ENCODE measurements at regions of chr3 and their contacts with region 1.

Region 1: DNA sequence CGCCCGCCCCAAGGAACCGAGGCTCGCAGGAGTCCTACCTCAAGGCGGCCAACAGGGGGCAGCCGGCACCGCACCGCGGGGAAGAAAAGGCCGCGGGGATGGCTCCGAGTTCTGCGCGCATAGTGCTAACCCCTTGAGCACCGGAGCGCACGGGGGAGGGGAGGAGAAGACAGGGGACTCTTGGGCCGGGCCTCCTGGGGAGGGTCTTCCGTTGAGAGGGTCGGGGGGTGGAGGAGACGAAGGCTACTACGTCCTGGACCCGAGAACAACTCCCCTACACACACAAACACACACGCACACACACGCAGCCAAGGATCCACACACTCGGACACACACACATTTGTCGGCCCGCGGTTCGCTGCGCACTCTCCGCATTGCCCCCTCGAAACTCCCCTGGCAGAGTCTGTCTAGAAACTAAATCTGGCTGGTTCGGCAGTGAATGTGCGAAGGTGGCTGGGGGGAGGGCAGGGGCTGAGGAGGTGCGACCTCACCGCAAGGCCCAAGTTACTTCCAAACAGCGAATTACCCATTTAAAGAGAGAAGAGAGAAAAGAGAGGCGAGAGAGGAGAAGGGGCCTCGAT is 1.8 kb downstream of the WNT5A start:
- DNase-seq: peak; percentile 78
- ATAC-seq: peak; percentile 71
- H3K4me3 Mint-ChIP-seq: peak overlapping the region; percentile 17
- H3K27ac Mint-ChIP-seq: no peak overlapping the region
- H3K4me1 Mint-ChIP-seq: peaks cover 34% of the 10 kb centered on the region
- H3K27me3 Mint-ChIP-seq: peaks cover 70% of the 10 kb centered on the region

Region 2: GRCh38 chr3:55615694-55616295 is 130.5 kb after region 1 on chr3:
- CTCF ChIA-PET with region 1: no interaction called
- POLR2A ChIA-PET with region 1: no interaction called
- intact Hi-C with region 1: no loop called
- DNase-seq: no peak
- ATAC-seq: no peak
- H3K4me3 Mint-ChIP-seq: no peak overlapping the region
- H3K27ac Mint-ChIP-seq: no peak overlapping the region
- H3K4me1 Mint-ChIP-seq: peaks cover 3% of the 10 kb centered on the region
- H3K27me3 Mint-ChIP-seq: peaks cover 6% of the 10 kb centered on the region

Region 3: DNA sequence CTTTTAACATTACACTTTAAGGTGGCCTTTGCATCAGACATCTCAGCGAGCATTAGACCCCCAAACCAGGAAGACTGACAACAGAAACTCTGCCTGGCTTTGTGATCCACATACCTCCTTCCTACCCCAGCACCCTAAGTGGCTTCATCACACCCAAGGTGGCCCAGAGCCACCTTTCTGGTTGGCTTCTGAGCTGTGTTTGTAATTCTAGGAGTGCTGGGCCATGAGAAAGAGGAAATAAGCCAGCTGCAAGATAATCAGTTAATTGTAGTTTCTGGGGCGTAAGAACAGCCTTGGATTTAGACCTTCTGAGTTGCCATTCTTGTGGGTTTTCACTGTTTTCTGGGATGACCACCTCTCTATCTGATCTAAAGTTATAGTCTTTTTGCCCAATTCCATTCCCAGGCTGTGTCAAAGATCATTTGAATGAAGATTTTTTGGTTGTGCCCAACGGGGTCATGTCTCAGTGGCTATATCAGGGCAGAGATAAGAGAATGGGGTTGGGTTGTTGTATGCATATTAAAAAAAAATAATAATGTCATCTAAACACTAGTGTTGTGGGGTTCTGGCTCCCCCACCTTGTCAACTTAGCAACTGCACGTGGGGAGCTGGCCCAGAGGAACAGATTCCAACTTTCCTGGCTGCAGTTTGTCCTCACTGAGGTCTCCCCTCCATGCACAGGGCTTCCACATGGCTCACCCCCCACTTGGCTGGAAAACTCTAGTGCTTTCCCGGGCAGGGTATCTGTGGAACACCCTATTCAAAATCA is 236.6 kb after region 1 on chr3:
- CTCF ChIA-PET with region 1: no interaction called
- POLR2A ChIA-PET with region 1: no interaction called
- intact Hi-C with region 1: loop called in 1 of 2 experiments (anchors 5 kb)
- DNase-seq: peak; percentile 15
- ATAC-seq: no peak
- H3K4me3 Mint-ChIP-seq: no peak overlapping the region
- H3K27ac Mint-ChIP-seq: no peak overlapping the region
- H3K4me1 Mint-ChIP-seq: no peaks in the 10 kb centered on the region
- H3K27me3 Mint-ChIP-seq: peaks cover 17% of the 10 kb centered on the region

Region 4: GRCh38 chr3:56042326-56042951 is 557.1 kb after region 1 on chr3:
- CTCF ChIA-PET with region 1: no interaction called
- POLR2A ChIA-PET with region 1: no interaction called
- intact Hi-C with region 1: loop called in 1 of 2 experiments (anchors 5 kb)
- DNase-seq: no peak
- ATAC-seq: no peak
- H3K4me3 Mint-ChIP-seq: no peak overlapping the region
- H3K27ac Mint-ChIP-seq: no peak overlapping the region
- H3K4me1 Mint-ChIP-seq: no peaks in the 10 kb centered on the region
- H3K27me3 Mint-ChIP-seq: peaks cover 2% of the 10 kb centered on the region

Region 5: GRCh38 chr3:56303487-56303886 is 818.2 kb after region 1 on chr3:
- CTCF ChIA-PET with region 1: no interaction called
- POLR2A ChIA-PET with region 1: no interaction called
- intact Hi-C with region 1: loop called in 1 of 2 experiments (anchors 2 kb)
- DNase-seq: peak; percentile 44
- ATAC-seq: no peak
- H3K4me3 Mint-ChIP-seq: no peak overlapping the region
- H3K27ac Mint-ChIP-seq: no peak overlapping the region
- H3K4me1 Mint-ChIP-seq: no peaks in the 10 kb centered on the region
- H3K27me3 Mint-ChIP-seq: peaks cover 24% of the 10 kb centered on the region

Measured in activated CD4-positive, alpha-beta T cell treated with anti-CD3 and anti-CD28 coated beads for 36 hours (primary cell).